B cell (primary cell): ENCODE measurements at regions of chr17 and their contacts with region 1.

Region 1: DNA sequence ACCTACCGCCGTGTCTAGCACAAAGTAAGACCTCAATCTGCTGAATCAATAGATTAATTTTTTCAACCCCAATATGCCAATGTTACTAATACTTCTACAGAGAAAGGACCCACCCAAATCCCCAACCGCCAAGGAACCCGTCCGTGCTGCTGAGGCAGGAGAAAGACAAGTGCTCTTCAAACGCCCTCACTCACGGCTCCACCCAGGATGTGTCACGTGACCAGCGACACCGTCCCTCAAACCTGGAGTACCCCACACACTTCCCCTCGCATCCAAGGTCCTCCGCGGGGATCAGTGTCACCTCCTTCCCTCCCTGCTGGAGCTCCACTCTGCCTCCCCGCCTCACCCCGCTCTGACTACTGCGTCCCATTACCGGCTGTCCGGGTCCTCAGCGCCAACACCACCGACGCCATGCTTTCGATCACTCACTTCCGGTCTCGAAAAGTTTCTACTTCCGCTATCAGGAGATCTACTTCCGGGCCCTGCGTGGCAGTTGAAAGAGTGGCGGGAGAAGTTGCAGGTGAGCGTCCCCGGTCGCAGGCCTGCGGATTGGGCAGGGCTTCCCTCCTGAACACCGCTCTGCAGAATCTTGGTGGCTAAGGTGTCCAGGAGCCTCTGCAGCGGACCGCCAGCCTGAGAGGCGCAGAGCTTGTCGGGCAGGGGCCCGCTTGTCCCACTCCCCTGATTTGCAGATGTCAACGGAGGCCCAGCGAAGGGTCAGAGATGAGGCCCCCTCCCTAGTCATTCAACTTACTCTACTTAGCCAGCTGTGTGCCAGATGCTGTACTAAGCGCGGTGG is at the starts of genes EME1 and MRPL27:
- DNase-seq: peak; percentile 96
- ATAC-seq: peak; percentile 88
- H3K4me3 ChIP-seq: peak within 1 kb of the TSS; percentile 65 to 85 (median 81)
- H3K4me3 Mint-ChIP-seq: peak within 1 kb of the TSS; percentile 100
- H3K27ac ChIP-seq: peak within 1 kb of the TSS; percentile 91 to 96
- H3K27ac Mint-ChIP-seq: peak within 1 kb of the TSS; percentile 100
- H3K4me1 ChIP-seq: peaks cover 14 to 19% of the 10 kb centered on the region in 2 donors
- H3K4me1 Mint-ChIP-seq: peaks cover 23% of the 10 kb centered on the region
- H3K27me3 ChIP-seq: no peaks in the 10 kb centered on the region
- H3K27me3 Mint-ChIP-seq: no peaks in the 10 kb centered on the region
- CTCF ChIP-seq: no peak
- total RNA-seq, gene EME1: 2.3 and 3.4 TPM in 2 replicates
- total RNA-seq, gene MRPL27: 33.5 and 40.2 TPM in 2 replicates

Region 2: DNA sequence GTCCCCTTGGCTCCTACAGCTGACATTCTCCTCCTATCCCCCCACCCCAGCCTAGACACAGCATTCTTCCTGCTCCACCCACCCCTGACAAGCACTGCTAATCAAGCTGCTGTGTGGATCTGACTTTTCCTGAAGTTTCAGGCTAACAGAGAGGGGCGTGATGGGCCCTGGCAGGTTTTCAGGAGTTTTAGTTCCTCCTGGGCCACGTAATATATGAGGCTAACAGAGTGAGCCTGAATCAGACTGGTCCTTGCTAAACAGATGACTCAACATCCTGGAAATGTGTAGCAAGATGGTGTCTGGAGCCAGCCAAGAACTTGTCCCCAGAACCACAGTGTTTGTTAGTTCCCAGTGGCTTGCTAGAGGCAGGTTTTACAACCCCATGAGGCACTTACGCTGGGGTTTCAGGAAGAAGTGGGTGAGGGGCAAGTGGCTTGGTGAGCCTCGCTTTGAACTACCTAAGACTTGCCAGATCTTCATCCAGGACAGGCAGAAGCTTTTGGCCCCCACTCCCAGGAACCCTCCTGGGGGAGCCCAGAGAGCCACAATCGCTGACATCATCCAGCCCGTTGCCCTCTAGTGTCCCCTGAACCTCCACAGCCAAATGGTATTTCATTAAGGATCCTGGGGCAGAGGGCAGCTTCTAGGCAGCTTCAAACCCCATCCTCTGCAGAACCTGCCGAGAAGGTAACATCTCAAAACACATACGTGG is 82.8 kb before region 1 on chr17:
- CTCF ChIA-PET with region 1: no interaction called
- POLR2A ChIA-PET with region 1: no interaction called
- intact Hi-C with region 1: no loop called
- DNase-seq: no peak
- ATAC-seq: no peak
- H3K4me3 ChIP-seq: no peak overlapping the region
- H3K4me3 Mint-ChIP-seq: no peak overlapping the region
- H3K27ac ChIP-seq: no peak overlapping the region
- H3K27ac Mint-ChIP-seq: no peak overlapping the region
- H3K4me1 ChIP-seq: no peaks in the 10 kb centered on the region
- H3K4me1 Mint-ChIP-seq: no peaks in the 10 kb centered on the region
- H3K27me3 ChIP-seq: peaks cover 0 to 26% (median 8%) of the 10 kb centered on the region in 4 experiments
- H3K27me3 Mint-ChIP-seq: peaks cover 51% of the 10 kb centered on the region
- CTCF ChIP-seq: no peak

Region 3: DNA sequence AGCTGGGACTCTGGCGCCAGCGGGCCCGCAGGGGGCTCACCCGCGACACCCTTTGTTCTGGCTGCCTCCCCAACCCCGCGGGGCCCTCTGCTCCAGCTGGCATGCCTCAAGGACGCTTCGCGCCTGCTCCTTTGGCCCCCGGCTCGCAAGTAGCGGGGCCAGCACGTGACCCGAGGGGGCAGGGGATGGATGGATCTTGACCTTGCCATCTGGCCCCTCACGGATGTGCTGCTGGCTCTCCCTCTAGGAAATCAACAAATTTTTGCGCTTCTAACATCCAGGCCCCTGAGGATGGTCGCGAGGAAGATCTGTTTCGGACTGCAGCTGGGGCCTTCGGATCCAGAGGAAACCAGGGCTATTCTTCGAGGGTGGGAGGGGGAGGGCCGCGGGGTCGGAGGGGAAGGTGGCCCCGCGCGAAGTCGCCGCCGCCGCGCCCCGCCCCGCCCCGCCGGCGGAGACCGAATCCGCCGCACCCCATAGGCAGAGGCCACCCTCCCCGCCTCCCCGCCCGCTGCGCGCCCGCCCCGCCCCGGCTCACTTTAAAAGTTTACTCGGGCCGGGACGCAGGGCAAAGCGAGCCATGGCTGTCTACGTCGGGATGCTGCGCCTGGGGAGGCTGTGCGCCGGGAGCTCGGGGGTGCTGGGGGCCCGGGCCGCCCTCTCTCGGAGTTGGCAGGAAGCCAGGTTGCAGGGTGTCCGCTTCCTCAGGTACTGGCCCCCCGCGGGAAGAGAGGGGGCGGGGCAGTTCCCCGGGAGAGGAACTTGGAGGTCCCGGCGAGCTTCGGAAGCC is 52.9 kb after region 1 on chr17 and contains the start of gene ACSF2:
- CTCF ChIA-PET with region 1: no interaction called
- POLR2A ChIA-PET with region 1: no interaction called
- intact Hi-C with region 1: loop called (anchors 10 kb)
- DNase-seq: peak; percentile 79
- ATAC-seq: peak; percentile 81
- H3K4me3 ChIP-seq: peak within 1 kb of the TSS; percentile 32 to 82 (median 70)
- H3K4me3 Mint-ChIP-seq: peak within 1 kb of the TSS; percentile 94
- H3K27ac ChIP-seq: peak within 1 kb of the TSS; percentile 41 to 46
- H3K27ac Mint-ChIP-seq: peak within 1 kb of the TSS; percentile 93
- H3K4me1 ChIP-seq: peaks cover 27 to 41% of the 10 kb centered on the region in 2 donors
- H3K4me1 Mint-ChIP-seq: peaks cover 51% of the 10 kb centered on the region
- H3K27me3 ChIP-seq: no peaks in the 10 kb centered on the region
- H3K27me3 Mint-ChIP-seq: no peaks in the 10 kb centered on the region
- CTCF ChIP-seq: no peak
- total RNA-seq, gene ACSF2: 66.1 and 82.6 TPM in 2 replicates